Panc1 (cell line): ENCODE measurements at regions of chr10 and their contacts with region 1.

Region 1: DNA sequence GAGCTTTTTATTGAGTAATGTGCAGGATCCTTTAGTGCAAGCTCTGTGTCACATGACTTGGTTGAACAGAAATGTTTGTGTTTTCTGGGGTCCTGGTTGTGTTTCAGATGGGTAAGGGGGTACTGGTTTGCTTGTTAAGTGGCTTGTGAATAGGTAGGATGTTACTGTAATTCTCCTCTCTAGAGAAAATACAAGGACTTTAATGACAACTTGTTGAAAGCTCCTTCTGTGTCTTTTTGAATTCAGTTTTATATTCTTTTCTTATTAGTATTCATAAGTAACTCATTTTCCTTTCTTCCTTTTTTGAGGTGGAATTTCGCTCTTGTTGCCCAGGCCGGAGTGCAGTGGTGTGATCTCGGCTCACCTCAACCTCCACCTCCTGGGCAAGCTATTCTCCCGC is 85.5 kb upstream of the BTBD16 start:
- DNase-seq: no peak
- ATAC-seq: no peak
- H3K4me3 ChIP-seq: no peak overlapping the region
- H3K27ac ChIP-seq: no peak overlapping the region
- H3K4me1 ChIP-seq: peaks cover 56% of the 10 kb centered on the region
- H3K27me3 ChIP-seq: no peaks in the 10 kb centered on the region
- CTCF ChIP-seq: no peak

Region 2: GRCh38 chr10:122126763-122127659 is 58.6 kb before region 1 on chr10:
- CTCF ChIA-PET with region 1: no interaction called
- POLR2A ChIA-PET with region 1: no interaction called
- in situ Hi-C with region 1: no loop called
- intact Hi-C with region 1: no loop called
- DNase-seq: no peak
- ATAC-seq: peak; percentile 83
- H3K4me3 ChIP-seq: peak overlapping the region in 1 of 2 experiments; percentile 41; a peak in 2 of 4 replicates
- H3K27ac ChIP-seq: peak overlapping the region; percentile 82
- H3K4me1 ChIP-seq: peaks cover 69% of the 10 kb centered on the region
- H3K27me3 ChIP-seq: no peaks in the 10 kb centered on the region
- CTCF ChIP-seq: no peak

Region 3: GRCh38 chr10:122164815-122165483 is 20.7 kb before region 1 on chr10:
- CTCF ChIA-PET with region 1: no interaction called
- POLR2A ChIA-PET with region 1: interaction called, 12 read pairs
- in situ Hi-C with region 1: no loop called
- intact Hi-C with region 1: no loop called
- DNase-seq: no peak
- ATAC-seq: no peak
- H3K4me3 ChIP-seq: no peak overlapping the region
- H3K27ac ChIP-seq: no peak overlapping the region
- H3K4me1 ChIP-seq: no peaks in the 10 kb centered on the region; the same call in 1 of the 2 replicates
- H3K27me3 ChIP-seq: no peaks in the 10 kb centered on the region
- CTCF ChIP-seq: no peak